AG04449 (cell line): ENCODE measurements at regions of chr1 and their contacts with region 1.

Region 1: GRCh38 chr1:235971571-235972310 is 93.1 kb downstream of the NID1 start:
- DNase-seq: peak; percentile 74
- H3K4me3 ChIP-seq: peak overlapping the region; percentile 52
- CTCF ChIP-seq: peak; percentile 84

Region 2: DNA sequence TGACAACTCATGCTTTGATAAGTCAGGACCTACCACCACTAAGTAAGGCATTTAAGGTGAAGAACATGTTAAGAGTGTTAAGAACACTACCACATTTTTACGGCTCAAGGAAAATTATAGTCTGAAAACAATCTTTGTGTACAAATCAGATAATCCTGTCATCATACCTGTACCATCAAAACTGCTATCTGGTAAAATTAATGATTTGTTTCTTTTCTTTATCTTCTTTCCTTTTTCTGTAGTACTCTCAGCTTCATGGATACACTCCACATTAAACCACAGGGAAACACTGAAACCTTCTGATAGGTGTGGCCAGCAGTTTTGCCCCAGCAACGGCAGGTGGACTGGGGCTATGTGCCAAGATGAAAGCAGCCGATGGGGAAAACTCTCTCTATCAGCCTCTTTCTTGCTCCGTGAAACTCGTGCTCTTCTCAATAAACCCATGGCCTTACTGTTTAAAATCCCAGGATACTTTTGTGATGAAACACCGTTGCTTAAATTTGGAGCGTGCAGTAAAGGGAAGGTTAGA is 180.1 kb before region 1 on chr1:
- CTCF ChIA-PET with region 1: interaction called, 29 read pairs
- POLR2A ChIA-PET with region 1: interaction called, 3 read pairs
- DNase-seq: no peak
- H3K4me3 ChIP-seq: no peak overlapping the region
- CTCF ChIP-seq: no peak

Region 3: DNA sequence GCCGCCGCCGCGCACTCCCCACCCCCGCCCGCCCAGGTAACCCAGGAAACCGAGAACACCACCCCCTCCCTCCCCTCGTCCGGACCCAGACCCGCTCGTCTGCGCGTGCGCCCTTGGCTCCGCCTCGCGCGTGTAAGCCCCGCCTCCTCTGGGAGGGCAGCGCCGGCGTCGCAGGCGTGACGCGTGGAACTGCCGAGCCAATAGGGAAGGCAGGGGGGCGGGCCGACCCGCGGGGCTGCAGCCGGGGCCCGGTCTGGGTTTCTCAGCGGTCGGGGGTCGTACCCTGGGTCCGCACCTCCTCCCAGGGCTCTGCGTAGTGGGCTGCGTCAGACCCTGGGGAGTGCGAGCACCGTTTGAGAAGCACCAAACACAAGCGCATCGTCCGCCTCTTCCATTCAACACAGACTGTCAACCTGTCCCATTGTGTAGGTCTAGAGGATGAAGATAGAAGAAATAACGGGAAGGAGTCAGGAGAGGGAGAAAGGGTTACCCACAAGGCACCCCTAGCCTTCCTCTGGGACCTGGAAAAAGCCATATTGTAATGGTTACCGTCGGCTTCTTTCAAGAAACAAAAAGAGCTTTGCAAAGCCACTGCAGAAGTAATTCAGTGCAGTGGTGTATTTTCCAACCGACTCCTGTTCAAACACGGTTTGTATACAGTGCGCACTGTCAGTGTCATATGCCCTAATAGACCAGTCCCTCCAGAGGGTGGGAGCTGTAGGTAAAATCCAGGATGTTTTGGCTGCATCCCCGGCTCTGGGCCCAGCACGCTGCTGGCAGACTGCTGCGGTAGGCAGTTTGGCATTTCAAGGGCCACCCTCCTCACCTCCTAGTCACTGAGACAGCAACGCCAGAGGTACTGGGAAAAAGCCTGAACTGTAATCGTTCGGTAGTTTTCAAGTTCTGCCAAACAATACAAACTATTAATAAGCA is 104.6 kb before region 1 on chr1:
- CTCF ChIA-PET with region 1: interaction called, 74 read pairs
- POLR2A ChIA-PET with region 1: interaction called, 5 read pairs
- DNase-seq: peak; percentile 42
- H3K4me3 ChIP-seq: peak overlapping the region; percentile 90
- CTCF ChIP-seq: no peak

Region 4: GRCh38 chr1:235938709-235939479 is 32.8 kb before region 1 on chr1:
- CTCF ChIA-PET with region 1: interaction called, 14 read pairs
- POLR2A ChIA-PET with region 1: no interaction called
- DNase-seq: no peak
- H3K4me3 ChIP-seq: no peak overlapping the region
- CTCF ChIP-seq: no peak

Region 5: GRCh38 chr1:235960809-235961208 is 10.9 kb before region 1 on chr1:
- CTCF ChIA-PET with region 1: interaction called, 55 read pairs
- POLR2A ChIA-PET with region 1: no interaction called
- DNase-seq: no peak
- H3K4me3 ChIP-seq: no peak overlapping the region
- CTCF ChIP-seq: no peak